IMR-90 (cell line): ENCODE measurements at regions of chr14 and their contacts with region 1.

Region 1: DNA sequence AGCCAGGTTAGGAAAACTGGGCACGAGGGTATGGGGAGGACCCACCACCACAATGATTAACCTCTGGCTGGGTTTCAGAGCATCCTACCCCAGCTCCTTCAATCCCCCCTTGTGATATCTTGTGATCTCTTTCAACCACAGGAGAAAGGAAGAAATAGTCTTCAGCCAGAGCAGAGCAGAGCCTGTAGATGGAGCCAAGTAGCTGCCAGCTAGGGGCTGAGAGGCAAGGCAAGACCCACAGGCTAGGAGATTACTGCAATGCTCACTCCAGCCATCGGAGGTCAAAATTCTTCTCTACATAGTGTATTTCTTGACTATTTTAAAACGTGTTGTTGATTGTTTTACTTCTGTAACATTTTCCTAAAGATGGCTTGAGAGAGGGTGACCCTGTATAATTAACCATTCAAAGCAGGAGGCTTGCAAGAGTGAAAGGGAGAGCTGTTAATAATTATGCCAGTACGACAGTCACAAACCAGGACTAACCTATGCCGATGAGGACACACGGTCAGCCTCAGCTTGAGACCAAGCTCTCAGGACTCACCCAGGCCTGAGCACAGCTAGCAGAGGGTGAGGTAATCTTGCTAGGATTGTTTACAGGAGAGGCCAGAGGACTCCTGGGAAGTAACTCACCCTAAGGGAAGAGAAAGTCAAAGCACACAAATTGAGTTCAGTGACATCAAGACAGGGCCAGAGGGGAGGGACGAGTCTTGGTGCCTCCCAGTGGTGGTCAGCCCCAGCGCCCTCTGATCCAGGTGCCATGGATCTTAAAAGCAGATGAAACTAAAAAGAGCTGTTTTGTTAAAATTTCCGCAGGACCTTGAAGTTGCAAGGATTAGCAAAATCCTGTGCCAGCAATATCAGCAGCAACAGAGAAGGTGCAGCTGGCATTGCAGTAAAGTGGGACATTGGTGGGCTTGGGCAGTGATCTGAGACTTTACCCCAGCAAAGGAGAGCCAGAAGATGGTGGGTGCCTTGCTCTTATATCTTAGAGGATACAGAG is 29.8 kb upstream of the CDKN3 start:
- DNase-seq: peak; percentile 70
- ATAC-seq: peak; percentile 89
- H3K4me3 ChIP-seq: no peak overlapping the region
- H3K27ac ChIP-seq: peak overlapping the region; percentile 10; the same call in 1 of the 2 replicates
- H3K4me1 ChIP-seq: peaks cover 7% of the 10 kb centered on the region; the same call in 1 of the 2 replicates
- H3K27me3 ChIP-seq: peaks cover 4% of the 10 kb centered on the region; the same call in 1 of the 2 replicates
- CTCF ChIP-seq: peak; percentile 76
- POLR2A ChIP-seq: peak; percentile 46
- RAD21 ChIP-seq: peak; percentile 76

Region 2: DNA sequence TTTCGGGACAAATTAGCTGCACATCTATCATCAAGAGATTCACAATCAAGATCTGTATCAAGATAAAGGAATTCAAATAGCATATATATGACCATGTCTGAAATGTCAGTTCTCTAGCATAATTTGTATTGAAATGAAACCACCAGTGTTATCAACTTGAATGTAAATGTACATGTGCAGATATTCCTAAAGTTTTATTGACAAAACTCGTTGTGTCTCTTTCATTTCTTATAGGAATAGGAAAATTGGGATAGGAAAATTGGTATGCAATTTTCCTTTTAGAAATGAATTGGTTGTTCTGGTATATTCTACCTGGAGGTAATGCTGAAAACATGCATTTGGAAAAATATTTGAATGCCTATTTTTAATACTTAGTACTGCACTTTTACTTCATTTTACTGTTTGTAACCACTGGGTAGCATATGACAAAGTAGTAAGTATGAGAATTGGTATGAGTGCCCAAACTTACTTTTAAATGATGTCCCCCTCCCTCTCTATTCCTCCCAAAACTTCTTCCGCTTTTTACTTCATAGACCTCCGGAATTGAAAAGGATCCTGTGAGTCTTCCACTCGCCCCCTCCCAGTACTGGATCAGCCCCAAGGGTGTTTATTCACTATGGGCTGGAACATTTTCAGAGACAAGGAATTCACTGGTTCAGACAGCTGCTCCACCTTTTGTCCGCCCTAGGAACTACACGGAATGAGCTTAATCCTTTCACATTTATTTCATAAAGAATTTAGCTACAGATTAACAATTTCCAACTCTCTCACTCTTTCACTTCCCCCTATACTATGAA is 53.2 kb after region 1 on chr14:
- CTCF ChIA-PET with region 1: interaction called, 3 read pairs
- POLR2A ChIA-PET with region 1: no interaction called
- dilution Hi-C with region 1: no loop called
- in situ Hi-C with region 1: no loop called
- intact Hi-C with region 1: loop called (anchors 1 kb)
- DNase-seq: peak; percentile 58
- ATAC-seq: peak; percentile 96
- H3K4me3 ChIP-seq: no peak overlapping the region
- H3K27ac ChIP-seq: peak overlapping the region; percentile 3; the same call in 1 of the 2 replicates
- H3K4me1 ChIP-seq: no peaks in the 10 kb centered on the region
- H3K27me3 ChIP-seq: no peaks in the 10 kb centered on the region
- CTCF ChIP-seq: peak; percentile 58
- POLR2A ChIP-seq: no peak
- RAD21 ChIP-seq: peak; percentile 54

Region 3: DNA sequence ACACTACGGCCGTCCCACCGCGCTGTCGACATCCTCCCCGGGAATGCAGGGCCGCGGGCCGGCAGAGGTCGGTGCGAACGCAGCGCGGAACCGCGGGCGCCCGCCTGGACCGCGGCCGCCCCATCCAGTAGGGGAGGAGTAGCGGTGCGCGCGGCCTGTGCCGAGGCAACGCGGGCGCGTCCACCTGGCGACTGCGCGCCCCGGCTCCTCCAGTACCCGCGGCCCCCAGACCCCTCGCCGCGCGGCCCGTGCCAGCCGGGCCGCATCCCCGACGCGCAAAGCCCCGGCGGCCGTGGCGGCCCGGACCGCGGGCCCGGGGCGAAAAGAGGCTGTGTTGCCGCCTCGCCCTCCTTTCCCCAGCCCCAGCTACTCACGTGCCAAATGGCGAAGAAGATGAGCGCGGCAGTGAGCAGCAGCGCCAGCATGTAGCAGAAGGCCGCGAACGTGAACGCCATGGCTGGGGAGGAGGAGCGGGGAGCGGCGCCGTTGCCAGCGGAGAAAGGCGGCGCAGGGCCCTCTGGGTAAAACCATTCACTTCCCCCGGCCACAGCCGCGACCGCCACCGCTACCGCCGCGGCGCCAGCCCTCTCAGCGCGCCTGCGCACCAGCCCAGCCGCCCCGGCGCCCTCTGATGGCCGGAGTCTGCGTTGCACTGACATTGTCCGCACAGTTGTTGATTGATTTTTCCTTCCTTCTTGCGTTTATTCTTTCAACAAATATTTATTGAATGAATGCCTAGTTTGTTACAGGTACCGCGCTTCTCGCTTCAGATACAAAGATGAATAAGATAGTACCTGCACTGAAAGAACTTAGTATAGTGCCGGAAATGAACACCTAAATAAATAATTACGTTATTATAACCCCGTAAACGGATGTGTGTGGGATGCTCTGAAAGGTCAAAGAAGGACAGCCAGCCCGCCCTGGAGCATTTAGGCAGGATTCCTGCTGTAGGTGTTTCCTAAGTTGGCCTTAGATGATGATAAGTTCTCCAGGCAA is 74.1 kb after region 1 on chr14 and contains the start of gene CNIH1:
- CTCF ChIA-PET with region 1: no interaction called
- POLR2A ChIA-PET with region 1: no interaction called
- dilution Hi-C with region 1: no loop called
- in situ Hi-C with region 1: no loop called
- intact Hi-C with region 1: loop called (anchors 5 kb)
- DNase-seq: peak; percentile 89
- ATAC-seq: peak; percentile 95
- H3K4me3 ChIP-seq: peak within 1 kb of the TSS; percentile 62
- H3K27ac ChIP-seq: peak within 1 kb of the TSS; percentile 87
- H3K4me1 ChIP-seq: peaks cover 8% of the 10 kb centered on the region
- H3K27me3 ChIP-seq: no peaks in the 10 kb centered on the region
- CTCF ChIP-seq: peak; percentile 95
- POLR2A ChIP-seq: peak; percentile 83; the same call in 1 of the 2 replicates
- RAD21 ChIP-seq: peak; percentile 45; the same call in 1 of the 2 replicates
- total RNA-seq, gene CNIH1: 134 and 244 TPM in 2 replicates

Region 4: DNA sequence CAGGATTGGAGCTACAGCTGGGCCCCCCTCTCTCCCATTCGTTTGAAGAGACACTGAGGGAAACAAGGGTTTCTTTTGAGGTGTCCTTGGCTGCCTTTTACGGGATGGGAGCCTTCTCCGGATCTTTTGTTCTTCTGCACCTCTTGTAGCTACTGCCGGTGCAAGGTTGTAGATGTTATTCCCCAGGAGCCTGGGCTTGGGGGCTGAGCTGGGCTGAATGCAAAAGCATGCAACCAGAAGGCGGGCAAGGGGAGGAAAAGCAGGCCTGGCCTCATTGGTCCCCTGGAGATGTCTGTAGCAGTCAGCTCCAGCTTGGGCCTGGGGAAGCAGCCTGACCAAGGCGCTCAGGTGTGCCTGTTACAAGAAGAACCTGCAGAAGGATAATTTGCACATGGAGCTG is 425.3 kb after region 1 on chr14:
- CTCF ChIA-PET with region 1: no interaction called
- POLR2A ChIA-PET with region 1: no interaction called
- dilution Hi-C with region 1: no loop called
- in situ Hi-C with region 1: no loop called
- intact Hi-C with region 1: loop called (anchors 5 kb)
- DNase-seq: no peak
- ATAC-seq: no peak
- H3K4me3 ChIP-seq: no peak overlapping the region
- H3K27ac ChIP-seq: no peak overlapping the region
- H3K4me1 ChIP-seq: peaks cover 11% of the 10 kb centered on the region
- H3K27me3 ChIP-seq: no peaks in the 10 kb centered on the region
- CTCF ChIP-seq: no peak
- POLR2A ChIP-seq: no peak
- RAD21 ChIP-seq: no peak

Region 5: DNA sequence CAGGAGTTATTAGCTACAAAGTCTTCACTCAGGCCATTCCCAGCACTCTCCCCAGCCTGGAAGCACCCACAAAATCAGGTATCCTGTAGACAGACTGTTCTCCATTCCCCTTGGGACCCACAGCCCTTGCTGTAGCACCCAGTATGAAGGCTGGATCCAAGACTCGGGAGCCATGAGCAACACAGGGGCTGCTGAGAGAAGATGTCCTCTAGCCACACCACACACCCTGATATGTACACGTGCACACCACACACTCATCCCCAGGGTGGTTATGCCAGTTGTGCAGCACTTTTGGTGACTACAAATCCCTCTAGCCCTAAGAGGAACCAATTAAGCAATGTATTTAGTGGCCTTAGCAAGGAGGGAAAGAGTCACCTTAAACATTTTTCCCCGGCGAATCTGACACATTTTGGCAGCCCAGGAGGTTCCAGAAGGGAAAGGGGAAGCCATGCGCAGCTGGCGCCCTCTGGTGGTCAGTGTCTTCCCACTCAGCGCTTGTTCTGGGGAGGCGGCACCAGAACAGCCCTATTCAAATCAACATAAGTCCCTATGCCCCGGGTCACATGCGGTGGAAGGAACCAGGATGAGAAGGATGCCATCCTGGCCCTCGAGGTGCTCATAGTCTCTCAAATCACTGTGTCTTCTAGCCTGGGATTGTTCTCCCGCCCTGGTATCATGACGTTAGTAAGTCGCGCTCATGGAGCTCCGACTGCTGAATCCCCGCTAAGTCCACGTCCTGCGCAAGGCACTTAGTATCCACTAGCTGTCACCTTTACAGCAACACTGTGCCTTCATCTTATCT is 438.7 kb after region 1 on chr14:
- CTCF ChIA-PET with region 1: no interaction called
- POLR2A ChIA-PET with region 1: no interaction called
- dilution Hi-C with region 1: no loop called
- in situ Hi-C with region 1: no loop called
- intact Hi-C with region 1: loop called (anchors 5 kb)
- DNase-seq: peak; percentile 77
- ATAC-seq: peak; percentile 96
- H3K4me3 ChIP-seq: no peak overlapping the region
- H3K27ac ChIP-seq: no peak overlapping the region
- H3K4me1 ChIP-seq: peaks cover 3% of the 10 kb centered on the region; the same call in 1 of the 2 replicates
- H3K27me3 ChIP-seq: no peaks in the 10 kb centered on the region; the same call in none of the 2 replicates
- CTCF ChIP-seq: peak; percentile 94
- POLR2A ChIP-seq: no peak
- RAD21 ChIP-seq: peak; percentile 96